Naive thymus-derived CD4-positive, alpha-beta T cell (primary cell): ENCODE measurements at regions of chr9 and their contacts with region 1.

Region 1: GRCh38 chr9:5437254-5438216 is at the start of gene PLGRKT:
- DNase-seq: peak; percentile 77 to 91 (median 89)
- ATAC-seq: peak; percentile 96
- H3K4me3 ChIP-seq: peak within 1 kb of the TSS; percentile 84
- H3K4me3 Mint-ChIP-seq: peak within 1 kb of the TSS; percentile 86 to 98 (median 96)
- H3K27ac ChIP-seq: peak within 1 kb of the TSS; percentile 81
- H3K27ac Mint-ChIP-seq: peak within 1 kb of the TSS; percentile 90 to 100 (median 98)
- H3K4me1 ChIP-seq: peaks cover 18 to 19% of the 10 kb centered on the region in 2 donors
- H3K4me1 Mint-ChIP-seq: peaks cover 7 to 50% (median 36%) of the 10 kb centered on the region in 7 donors
- H3K27me3 ChIP-seq: no peaks in the 10 kb centered on the region
- H3K27me3 Mint-ChIP-seq: no peaks in the 10 kb centered on the region
- total RNA-seq, gene PLGRKT: 15.8 to 31.7 (median 16.8) TPM

Region 2: GRCh38 chr9:4740638-4741364 is 696.7 kb before region 1 on chr9 and contains the start of gene AK3:
- CTCF ChIA-PET with region 1: no interaction called
- POLR2A ChIA-PET with region 1: no interaction called
- intact Hi-C with region 1: loop called (anchors 2 to 5 kb)
- DNase-seq: peak; percentile 72 to 85 (median 83)
- ATAC-seq: peak; percentile 95
- H3K4me3 ChIP-seq: peak within 1 kb of the TSS; percentile 73
- H3K4me3 Mint-ChIP-seq: peak within 1 kb of the TSS; percentile 88 to 99 (median 94)
- H3K27ac ChIP-seq: peak within 1 kb of the TSS; percentile 86
- H3K27ac Mint-ChIP-seq: peak within 1 kb of the TSS; percentile 86 to 98 (median 93)
- H3K4me1 ChIP-seq: peaks cover 10 to 16% of the 10 kb centered on the region in 2 donors
- H3K4me1 Mint-ChIP-seq: peaks cover 22 to 49% (median 40%) of the 10 kb centered on the region in 7 donors
- H3K27me3 ChIP-seq: no peaks in the 10 kb centered on the region
- H3K27me3 Mint-ChIP-seq: no peaks in the 10 kb centered on the region
- total RNA-seq, gene AK3: 18.0 to 34.8 (median 25.8) TPM

Region 3: GRCh38 chr9:4792572-4793458 is 644.7 kb before region 1 on chr9 and contains the start of gene RCL1:
- CTCF ChIA-PET with region 1: no interaction called
- POLR2A ChIA-PET with region 1: interaction called, 4 read pairs
- intact Hi-C with region 1: loop called (anchors 1 to 2 kb)
- DNase-seq: peak; percentile 93 to 98 (median 97)
- ATAC-seq: peak; percentile 96
- H3K4me3 ChIP-seq: peak within 1 kb of the TSS; percentile 99
- H3K4me3 Mint-ChIP-seq: peak within 1 kb of the TSS; percentile 83 to 97 (median 94)
- H3K27ac ChIP-seq: peak within 1 kb of the TSS; percentile 80
- H3K27ac Mint-ChIP-seq: peak within 1 kb of the TSS; percentile 71 to 97 (median 94)
- H3K4me1 ChIP-seq: peaks cover 4 to 18% of the 10 kb centered on the region in 2 donors
- H3K4me1 Mint-ChIP-seq: peaks cover 21 to 56% (median 45%) of the 10 kb centered on the region in 7 donors
- H3K27me3 ChIP-seq: no peaks in the 10 kb centered on the region
- H3K27me3 Mint-ChIP-seq: peaks cover 0 to 11% (median 0%) of the 10 kb centered on the region in 5 donors
- total RNA-seq, gene RCL1: 21.5 to 39.4 (median 23.4) TPM

Region 4: GRCh38 chr9:5186416-5187169 is 250.9 kb before region 1 on chr9:
- CTCF ChIA-PET with region 1: interaction called, 21 read pairs
- POLR2A ChIA-PET with region 1: interaction called, 3 read pairs
- intact Hi-C with region 1: loop called in 1 of 2 experiments (anchors 1 kb)
- DNase-seq: peak in 7 of 9 donors; percentile 51 to 74 (median 63)
- ATAC-seq: peak; percentile 92
- H3K4me3 ChIP-seq: no peak overlapping the region
- H3K4me3 Mint-ChIP-seq: peak overlapping the region in 1 of 10 donors; percentile 13
- H3K27ac ChIP-seq: no peak overlapping the region
- H3K27ac Mint-ChIP-seq: no peak overlapping the region
- H3K4me1 ChIP-seq: no peaks in the 10 kb centered on the region
- H3K4me1 Mint-ChIP-seq: peaks cover 5 to 15% (median 10%) of the 10 kb centered on the region in 7 donors
- H3K27me3 ChIP-seq: no peaks in the 10 kb centered on the region
- H3K27me3 Mint-ChIP-seq: peaks cover 0 to 5% (median 0%) of the 10 kb centered on the region in 5 donors

Region 5: DNA sequence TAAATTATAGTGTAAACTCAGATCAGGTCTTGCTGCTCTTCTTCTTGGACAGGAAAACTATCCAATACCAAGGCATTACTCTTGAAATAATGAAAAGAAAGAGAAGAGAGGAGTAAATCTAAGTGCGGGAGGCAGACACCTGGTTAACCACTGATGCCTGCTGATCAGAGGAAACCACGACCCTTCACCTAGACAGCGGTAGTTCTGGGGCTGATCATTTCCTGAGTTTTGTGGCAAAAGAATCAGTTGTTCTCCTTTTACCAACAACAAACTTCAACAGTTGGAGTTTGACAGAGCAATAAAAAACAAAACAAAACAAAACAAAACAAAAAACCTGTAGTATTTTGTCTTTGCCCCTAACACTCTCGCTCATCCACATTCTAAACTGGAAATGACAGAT is 100.8 kb before region 1 on chr9:
- CTCF ChIA-PET with region 1: no interaction called
- POLR2A ChIA-PET with region 1: interaction called, 3 read pairs
- intact Hi-C with region 1: loop called (anchors 2 to 5 kb)
- DNase-seq: peak in 7 of 9 donors; percentile 47 to 70 (median 60)
- ATAC-seq: peak; percentile 62
- H3K4me3 ChIP-seq: peak overlapping the region; percentile 27
- H3K4me3 Mint-ChIP-seq: peak overlapping the region; percentile 64 to 87 (median 80)
- H3K27ac ChIP-seq: peak overlapping the region; percentile 64
- H3K27ac Mint-ChIP-seq: peak overlapping the region; percentile 79 to 95 (median 91)
- H3K4me1 ChIP-seq: peaks cover 24 to 28% of the 10 kb centered on the region in 2 donors
- H3K4me1 Mint-ChIP-seq: peaks cover 20 to 64% (median 50%) of the 10 kb centered on the region in 7 donors
- H3K27me3 ChIP-seq: no peaks in the 10 kb centered on the region
- H3K27me3 Mint-ChIP-seq: no peaks in the 10 kb centered on the region

Region 6: GRCh38 chr9:5557606-5558587 is 120.4 kb after region 1 on chr9:
- CTCF ChIA-PET with region 1: no interaction called
- POLR2A ChIA-PET with region 1: interaction called, 15 read pairs
- intact Hi-C with region 1: no loop called
- DNase-seq: peak; percentile 20 to 73 (median 61)
- ATAC-seq: peak; percentile 97
- H3K4me3 ChIP-seq: peak overlapping the region; percentile 24
- H3K4me3 Mint-ChIP-seq: peak overlapping the region; percentile 58 to 79 (median 68)
- H3K27ac ChIP-seq: peak overlapping the region; percentile 68
- H3K27ac Mint-ChIP-seq: peak overlapping the region; percentile 87 to 98 (median 94)
- H3K4me1 ChIP-seq: peaks cover 24 to 31% of the 10 kb centered on the region in 2 donors
- H3K4me1 Mint-ChIP-seq: peaks cover 32 to 59% (median 53%) of the 10 kb centered on the region in 7 donors
- H3K27me3 ChIP-seq: no peaks in the 10 kb centered on the region
- H3K27me3 Mint-ChIP-seq: no peaks in the 10 kb centered on the region

Region 7: DNA sequence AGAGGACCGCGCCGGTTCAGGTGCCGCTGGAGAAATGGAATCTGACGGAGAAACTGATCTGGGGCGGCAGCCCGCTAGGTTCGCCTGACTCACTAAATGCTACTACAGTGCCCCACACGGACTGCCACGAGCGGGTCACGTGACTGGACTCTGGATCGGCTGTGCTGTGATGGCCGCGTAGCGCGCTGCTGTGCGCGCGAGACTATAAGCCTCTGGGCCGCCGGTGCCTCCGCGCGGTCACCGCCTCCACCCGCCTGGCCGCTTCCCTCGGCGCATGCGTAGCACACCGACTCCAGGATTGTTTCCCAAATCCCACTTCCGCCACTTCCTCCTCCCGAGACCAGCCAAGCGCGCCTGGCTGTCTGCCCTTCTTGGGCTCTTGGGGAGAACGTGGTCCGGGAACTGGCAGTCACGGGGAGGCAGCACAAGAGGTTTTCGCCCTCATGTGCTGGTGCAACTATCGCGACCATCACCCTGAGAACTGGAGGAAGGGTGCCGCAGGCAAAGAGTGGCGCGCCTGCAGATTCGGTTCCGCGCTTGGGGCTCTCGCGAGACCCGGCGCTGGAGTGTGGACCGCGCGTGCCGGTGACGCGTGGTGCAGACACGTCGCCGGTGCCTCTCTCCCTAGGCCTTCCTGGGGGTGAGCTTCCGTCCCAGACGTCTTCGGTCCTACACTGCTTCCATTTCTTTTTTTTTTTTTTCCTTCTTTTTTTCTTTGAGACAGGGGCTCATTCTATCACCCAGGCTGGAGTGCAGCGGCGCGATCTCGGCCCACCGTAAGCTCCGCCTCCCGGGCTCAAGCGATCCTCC is 1243.8 kb after region 1 on chr9:
- CTCF ChIA-PET with region 1: no interaction called
- POLR2A ChIA-PET with region 1: no interaction called
- intact Hi-C with region 1: loop called in 1 of 2 experiments (anchors 2 kb)
- DNase-seq: peak; percentile 71 to 95 (median 90)
- ATAC-seq: peak; percentile 90
- H3K4me3 ChIP-seq: peak overlapping the region; percentile 89
- H3K4me3 Mint-ChIP-seq: peak overlapping the region; percentile 88 to 98 (median 95)
- H3K27ac ChIP-seq: peak overlapping the region; percentile 91
- H3K27ac Mint-ChIP-seq: peak overlapping the region; percentile 97 to 100 (median 99)
- H3K4me1 ChIP-seq: peaks cover 0 to 6% of the 10 kb centered on the region in 2 donors
- H3K4me1 Mint-ChIP-seq: peaks cover 7 to 31% (median 20%) of the 10 kb centered on the region in 7 donors
- H3K27me3 ChIP-seq: no peaks in the 10 kb centered on the region
- H3K27me3 Mint-ChIP-seq: no peaks in the 10 kb centered on the region